GM12878 (cell line): ENCODE measurements at regions of chr16 and their contacts with region 1.

Region 1: GRCh38 chr16:71961066-71962039 is 38.8 kb downstream of the PKD1L3 start:
- DNase-seq: peak; percentile 52
- ATAC-seq: peak; percentile 96
- H3K4me3 ChIP-seq: no peak overlapping the region
- H3K27ac ChIP-seq: no peak overlapping the region
- H3K4me1 ChIP-seq: peaks cover 9% of the 10 kb centered on the region
- H3K27me3 ChIP-seq: no peaks in the 10 kb centered on the region; a peak in 1 of 4 replicates
- CTCF ChIP-seq: peak; percentile 82 to 96 (median 87)
- EP300 ChIP-seq: no peak
- POLR2A ChIP-seq: no peak
- RAD21 ChIP-seq: peak; percentile 94

Region 2: DNA sequence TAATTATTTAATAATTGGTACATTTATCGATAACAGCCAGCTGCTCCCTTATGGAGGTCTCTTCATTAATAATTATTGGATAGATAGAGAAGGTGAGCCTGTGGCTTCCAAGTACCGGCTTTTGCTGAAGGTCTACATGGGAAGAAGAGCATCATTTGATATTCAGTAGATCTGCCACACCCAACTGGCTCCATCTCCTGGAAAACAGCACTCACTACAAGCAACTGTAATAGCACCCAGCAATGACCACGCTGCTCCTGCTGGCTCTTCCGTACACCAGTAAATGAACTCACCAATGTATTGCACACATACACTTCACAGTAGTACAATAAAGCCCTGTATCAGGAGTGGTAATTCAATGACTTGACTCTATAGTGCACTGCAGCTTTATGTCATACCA is 315.9 kb before region 1 on chr16:
- CTCF ChIA-PET with region 1: interaction called, 11 read pairs
- POLR2A ChIA-PET with region 1: no interaction called
- RAD21 ChIA-PET with region 1: no interaction called
- SMC1A ChIA-PET with region 1: no interaction called
- in situ Hi-C with region 1: no loop called
- intact Hi-C with region 1: loop called (anchors 10 kb)
- DNase-seq: no peak
- ATAC-seq: peak; percentile 77
- H3K4me3 ChIP-seq: no peak overlapping the region
- H3K27ac ChIP-seq: no peak overlapping the region
- H3K4me1 ChIP-seq: no peaks in the 10 kb centered on the region
- H3K27me3 ChIP-seq: no peaks in the 10 kb centered on the region
- CTCF ChIP-seq: peak; percentile 48 to 49 (median 48); a peak in 5 of 6 replicates
- EP300 ChIP-seq: no peak
- POLR2A ChIP-seq: no peak
- RAD21 ChIP-seq: peak; percentile 47

Region 3: GRCh38 chr16:71746442-71747046 is 214.8 kb before region 1 on chr16:
- CTCF ChIA-PET with region 1: interaction called, 11 read pairs
- POLR2A ChIA-PET with region 1: no interaction called
- RAD21 ChIA-PET with region 1: interaction called, 5 read pairs
- SMC1A ChIA-PET with region 1: no interaction called
- in situ Hi-C with region 1: no loop called
- intact Hi-C with region 1: loop called (anchors 2 kb)
- DNase-seq: no peak
- ATAC-seq: peak; percentile 71
- H3K4me3 ChIP-seq: no peak overlapping the region
- H3K27ac ChIP-seq: no peak overlapping the region
- H3K4me1 ChIP-seq: no peaks in the 10 kb centered on the region
- H3K27me3 ChIP-seq: no peaks in the 10 kb centered on the region
- CTCF ChIP-seq: peak; percentile 48 to 63 (median 52)
- EP300 ChIP-seq: no peak
- POLR2A ChIP-seq: no peak
- RAD21 ChIP-seq: peak; percentile 69

Region 4: GRCh38 chr16:71894921-71895678 is 66.3 kb before region 1 on chr16 and contains the start of gene IST1:
- CTCF ChIA-PET with region 1: interaction called, 5 read pairs
- POLR2A ChIA-PET with region 1: interaction called, 3 read pairs
- RAD21 ChIA-PET with region 1: interaction called, 14 read pairs
- SMC1A ChIA-PET with region 1: interaction called, 9 read pairs
- in situ Hi-C with region 1: no loop called
- intact Hi-C with region 1: no loop called
- DNase-seq: peak; percentile 85
- ATAC-seq: peak; percentile 90
- H3K4me3 ChIP-seq: peak within 1 kb of the TSS; percentile 91
- H3K27ac ChIP-seq: peak within 1 kb of the TSS; percentile 98
- H3K4me1 ChIP-seq: no peaks in the 10 kb centered on the region
- H3K27me3 ChIP-seq: no peaks in the 10 kb centered on the region
- CTCF ChIP-seq: no peak
- EP300 ChIP-seq: peak in 1 of 2 experiments; percentile 33; a peak in 2 of 4 replicates
- POLR2A ChIP-seq: peak; percentile 93
- RAD21 ChIP-seq: no peak
- polyA plus RNA-seq, gene IST1: 97.3 to 136 TPM

Region 5: DNA sequence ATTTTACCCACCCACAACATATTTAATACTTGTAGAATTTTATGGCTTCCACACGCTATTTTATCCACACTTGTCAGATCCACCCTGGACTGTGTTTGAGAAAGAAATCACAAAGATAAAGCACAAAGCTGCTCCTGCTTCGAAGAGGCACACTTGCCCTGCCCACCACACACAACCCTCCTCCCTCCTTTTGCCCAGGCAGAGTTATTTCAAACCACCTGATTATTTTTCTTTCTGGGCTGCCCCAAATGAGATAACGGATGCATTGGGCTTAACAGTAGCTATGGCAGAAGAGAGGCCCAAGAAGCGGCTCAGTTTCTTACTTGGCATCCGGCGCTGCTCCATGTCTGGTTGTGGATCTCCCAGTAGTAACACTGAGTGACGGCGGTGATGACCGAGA is 11.6 kb after region 1 on chr16:
- CTCF ChIA-PET with region 1: interaction called, 22 read pairs
- POLR2A ChIA-PET with region 1: no interaction called
- RAD21 ChIA-PET with region 1: no interaction called
- SMC1A ChIA-PET with region 1: interaction called, 10 read pairs
- in situ Hi-C with region 1: no loop called
- intact Hi-C with region 1: no loop called
- DNase-seq: no peak
- ATAC-seq: no peak
- H3K4me3 ChIP-seq: no peak overlapping the region
- H3K27ac ChIP-seq: no peak overlapping the region
- H3K4me1 ChIP-seq: no peaks in the 10 kb centered on the region
- H3K27me3 ChIP-seq: no peaks in the 10 kb centered on the region; a peak in 1 of 4 replicates
- CTCF ChIP-seq: no peak
- EP300 ChIP-seq: no peak
- POLR2A ChIP-seq: no peak
- RAD21 ChIP-seq: no peak

Region 6: DNA sequence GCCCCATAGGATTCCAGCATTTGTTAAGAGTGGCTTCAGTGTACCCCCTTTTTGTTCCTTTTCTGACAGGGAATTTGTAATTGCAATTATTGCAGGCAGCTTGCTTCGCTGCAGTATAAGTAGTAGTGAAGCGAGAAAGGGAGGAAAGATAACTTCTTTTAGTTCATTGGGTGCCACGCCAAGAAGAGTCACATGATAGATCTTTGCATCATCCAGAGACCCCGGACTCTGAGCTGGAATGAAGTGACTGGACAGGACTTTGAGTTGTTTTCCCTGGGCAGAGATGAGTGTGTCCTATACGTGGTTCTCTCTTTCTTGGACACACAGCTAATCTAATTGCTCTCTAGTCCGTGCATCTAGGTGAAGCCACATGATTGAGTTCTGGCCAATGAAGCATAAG is 255.4 kb after region 1 on chr16:
- CTCF ChIA-PET with region 1: no interaction called
- POLR2A ChIA-PET with region 1: no interaction called
- RAD21 ChIA-PET with region 1: no interaction called
- SMC1A ChIA-PET with region 1: no interaction called
- in situ Hi-C with region 1: no loop called
- intact Hi-C with region 1: no loop called
- DNase-seq: no peak
- ATAC-seq: no peak
- H3K4me3 ChIP-seq: no peak overlapping the region
- H3K27ac ChIP-seq: no peak overlapping the region
- H3K4me1 ChIP-seq: no peaks in the 10 kb centered on the region
- H3K27me3 ChIP-seq: no peaks in the 10 kb centered on the region
- CTCF ChIP-seq: no peak
- EP300 ChIP-seq: no peak
- POLR2A ChIP-seq: no peak
- RAD21 ChIP-seq: no peak